PC-3 (cell line): ENCODE measurements at regions of chr14 and their contacts with region 1.

Region 1: DNA sequence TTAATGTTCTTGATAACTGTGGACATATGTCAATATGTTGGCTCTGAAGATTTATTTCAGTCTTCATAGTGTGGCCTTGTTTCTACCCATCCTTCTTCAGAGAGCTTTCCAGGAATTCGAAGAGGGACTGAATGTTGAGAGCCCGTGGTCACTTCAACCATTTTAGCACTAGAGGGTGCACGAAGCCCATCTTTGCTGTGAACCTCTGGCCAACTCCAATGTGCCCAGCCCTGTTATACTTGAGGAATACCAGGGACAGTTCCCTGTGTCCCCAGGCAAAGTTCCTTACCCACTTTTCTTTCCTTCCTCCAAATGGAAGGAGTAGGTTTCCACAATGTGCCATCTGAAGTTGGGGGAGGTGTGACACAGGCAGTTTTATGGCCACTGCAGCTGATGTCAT is 603.5 kb downstream of the RPL10L start:
- DNase-seq: peak; percentile 90
- ATAC-seq: no peak
- H3K4me3 ChIP-seq: no peak overlapping the region
- H3K27ac ChIP-seq: no peak overlapping the region
- H3K4me1 ChIP-seq: peaks cover 11% of the 10 kb centered on the region
- H3K27me3 ChIP-seq: no peaks in the 10 kb centered on the region
- CTCF ChIP-seq: no peak; the same call in 1 of the 2 replicates

Region 2: GRCh38 chr14:46250113-46250703 is 202.1 kb after region 1 on chr14:
- CTCF ChIA-PET with region 1: no interaction called
- POLR2A ChIA-PET with region 1: no interaction called
- intact Hi-C with region 1: loop called (anchors 10 kb)
- DNase-seq: peak; percentile 64
- ATAC-seq: peak; percentile 35; the same call in 1 of the 2 replicates
- H3K4me3 ChIP-seq: no peak overlapping the region
- H3K27ac ChIP-seq: no peak overlapping the region
- H3K4me1 ChIP-seq: no peaks in the 10 kb centered on the region
- H3K27me3 ChIP-seq: no peaks in the 10 kb centered on the region
- CTCF ChIP-seq: peak; percentile 76

Region 3: DNA sequence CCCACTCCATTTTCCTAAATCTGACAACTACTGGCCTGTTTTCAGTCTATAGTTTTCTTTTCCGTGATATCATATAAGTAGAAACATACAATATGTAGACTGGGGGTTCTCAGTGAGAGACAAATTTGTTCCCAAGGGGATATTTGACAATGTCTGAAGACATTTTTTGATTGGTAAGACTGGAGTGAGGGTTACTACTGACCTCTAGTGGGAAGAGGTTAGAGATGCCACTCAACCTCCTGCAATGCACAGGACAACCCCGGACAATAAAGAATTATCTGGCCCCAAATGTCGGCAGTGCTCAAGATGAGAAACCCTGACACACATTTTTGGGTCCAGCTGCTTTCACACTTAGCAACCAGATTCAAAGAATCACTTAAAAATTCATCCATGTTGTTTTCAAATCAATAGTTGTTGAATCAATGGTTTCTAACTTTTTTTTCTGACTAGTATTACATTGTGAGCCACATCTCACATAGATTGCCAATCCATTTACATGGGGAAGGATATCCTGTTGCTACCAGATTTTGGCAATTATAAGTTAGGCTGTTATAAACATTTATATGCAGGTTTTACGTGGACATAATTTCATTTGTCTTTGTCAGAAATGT is 296.3 kb after region 1 on chr14:
- CTCF ChIA-PET with region 1: no interaction called
- POLR2A ChIA-PET with region 1: no interaction called
- intact Hi-C with region 1: loop called (anchors 5 kb)
- DNase-seq: peak; percentile 64
- ATAC-seq: peak; percentile 93
- H3K4me3 ChIP-seq: no peak overlapping the region
- H3K27ac ChIP-seq: no peak overlapping the region
- H3K4me1 ChIP-seq: no peaks in the 10 kb centered on the region
- H3K27me3 ChIP-seq: peaks cover 7% of the 10 kb centered on the region; the same call in 1 of the 2 replicates
- CTCF ChIP-seq: peak; percentile 81